H1 (cell line): ENCODE measurements at regions of chr9 and their contacts with region 1.

Region 1: DNA sequence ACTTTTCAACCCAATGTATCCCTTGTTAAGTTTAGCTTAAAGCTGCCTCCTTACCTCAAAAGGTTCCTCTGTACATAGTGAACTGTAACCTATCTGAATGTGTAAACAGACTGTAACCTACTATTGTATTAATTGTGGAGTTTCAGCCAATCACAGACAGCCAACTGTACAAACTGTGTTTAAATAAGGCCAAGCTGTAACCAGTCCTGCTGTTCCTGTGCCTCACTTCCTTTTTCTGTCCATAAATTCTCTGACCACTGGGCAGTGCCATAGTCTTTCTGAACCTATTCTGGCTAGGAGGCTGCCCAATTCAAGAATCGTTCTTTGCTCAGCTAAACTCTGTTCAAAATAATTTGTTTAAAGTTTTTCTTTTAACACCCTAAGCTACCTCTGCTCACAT is 74.7 kb upstream of the DAPK1 start:
- DNase-seq: no peak
- H3K4me3 ChIP-seq: no peak overlapping the region
- H3K27ac ChIP-seq: no peak overlapping the region
- H3K4me1 ChIP-seq: peaks cover 0 to 5% (median 1%) of the 10 kb centered on the region in 4 experiments; a peak in 4 of 7 replicates
- H3K27me3 ChIP-seq: no peaks in the 10 kb centered on the region; a peak in 1 of 7 replicates
- CTCF ChIP-seq: no peak
- EP300 ChIP-seq: no peak
- POLR2A ChIP-seq: no peak
- RAD21 ChIP-seq: peak in 1 of 2 experiments; percentile 7; a peak in 2 of 4 replicates

Region 2: GRCh38 chr9:87336914-87337333 is 86.1 kb before region 1 on chr9:
- CTCF ChIA-PET with region 1: interaction called, 9 read pairs
- POLR2A ChIA-PET with region 1: interaction called, 22 read pairs
- DNase-seq: no peak
- H3K4me3 ChIP-seq: peak overlapping the region; percentile 11 to 61 (median 43); a peak in 5 of 8 replicates
- H3K27ac ChIP-seq: no peak overlapping the region
- H3K4me1 ChIP-seq: peaks cover 3 to 14% (median 13%) of the 10 kb centered on the region in 4 experiments; a peak in 6 of 7 replicates
- H3K27me3 ChIP-seq: no peaks in the 10 kb centered on the region; a peak in 2 of 7 replicates
- CTCF ChIP-seq: peak in 2 of 3 experiments; percentile 64 to 65; a peak in 3 of 4 replicates
- EP300 ChIP-seq: no peak
- POLR2A ChIP-seq: no peak
- RAD21 ChIP-seq: peak; percentile 89

Region 3: GRCh38 chr9:87405677-87406542 is 17.1 kb before region 1 on chr9:
- CTCF ChIA-PET with region 1: no interaction called
- POLR2A ChIA-PET with region 1: interaction called, 16 read pairs
- DNase-seq: no peak
- H3K4me3 ChIP-seq: peak overlapping the region in 1 of 4 experiments; percentile 32; a peak in 2 of 8 replicates
- H3K27ac ChIP-seq: peak overlapping the region; percentile 35; the same call in 1 of the 2 replicates
- H3K4me1 ChIP-seq: peaks cover 6 to 42% (median 32%) of the 10 kb centered on the region in 4 experiments
- H3K27me3 ChIP-seq: no peaks in the 10 kb centered on the region
- CTCF ChIP-seq: no peak
- EP300 ChIP-seq: no peak
- POLR2A ChIP-seq: no peak
- RAD21 ChIP-seq: no peak

Region 4: GRCh38 chr9:87433853-87434252 is 10.9 kb after region 1 on chr9:
- CTCF ChIA-PET with region 1: interaction called, 4 read pairs
- POLR2A ChIA-PET with region 1: interaction called, 34 read pairs
- DNase-seq: no peak
- H3K4me3 ChIP-seq: no peak overlapping the region
- H3K27ac ChIP-seq: no peak overlapping the region
- H3K4me1 ChIP-seq: peaks cover 2 to 9% (median 6%) of the 10 kb centered on the region in 4 experiments; a peak in 6 of 7 replicates
- H3K27me3 ChIP-seq: no peaks in the 10 kb centered on the region
- CTCF ChIP-seq: no peak
- EP300 ChIP-seq: no peak
- POLR2A ChIP-seq: no peak
- RAD21 ChIP-seq: no peak

Region 5: DNA sequence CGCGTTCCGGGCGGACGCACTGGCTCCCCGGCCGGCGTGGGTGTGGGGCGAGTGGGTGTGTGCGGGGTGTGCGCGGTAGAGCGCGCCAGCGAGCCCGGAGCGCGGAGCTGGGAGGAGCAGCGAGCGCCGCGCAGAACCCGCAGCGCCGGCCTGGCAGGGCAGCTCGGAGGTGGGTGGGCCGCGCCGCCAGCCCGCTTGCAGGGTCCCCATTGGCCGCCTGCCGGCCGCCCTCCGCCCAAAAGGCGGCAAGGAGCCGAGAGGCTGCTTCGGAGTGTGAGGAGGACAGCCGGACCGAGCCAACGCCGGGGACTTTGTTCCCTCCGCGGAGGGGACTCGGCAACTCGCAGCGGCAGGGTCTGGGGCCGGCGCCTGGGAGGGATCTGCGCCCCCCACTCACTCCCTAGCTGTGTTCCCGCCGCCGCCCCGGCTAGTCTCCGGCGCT is 74.6 kb after region 1 on chr9 and contains the start of gene DAPK1:
- CTCF ChIA-PET with region 1: interaction called, 12 read pairs
- POLR2A ChIA-PET with region 1: interaction called, 18 read pairs
- DNase-seq: peak in 1 of 2 experiments; percentile 86
- H3K4me3 ChIP-seq: peak within 1 kb of the TSS; percentile 65 to 83 (median 76)
- H3K27ac ChIP-seq: peak within 1 kb of the TSS; percentile 58; the same call in 1 of the 2 replicates
- H3K4me1 ChIP-seq: peaks cover 0 to 2% (median 0%) of the 10 kb centered on the region in 4 experiments; a peak in 1 of 7 replicates
- H3K27me3 ChIP-seq: no peaks in the 10 kb centered on the region
- CTCF ChIP-seq: peak; percentile 5 to 27 (median 18); a peak in 3 of 4 replicates
- EP300 ChIP-seq: no peak
- POLR2A ChIP-seq: no peak
- RAD21 ChIP-seq: no peak; a peak in 1 of 4 replicates
- total RNA-seq, gene DAPK1: 128 and 131 TPM in 2 replicates